T-cell (primary cell): ENCODE measurements at regions of chr14 and their contacts with region 1.

Region 1: DNA sequence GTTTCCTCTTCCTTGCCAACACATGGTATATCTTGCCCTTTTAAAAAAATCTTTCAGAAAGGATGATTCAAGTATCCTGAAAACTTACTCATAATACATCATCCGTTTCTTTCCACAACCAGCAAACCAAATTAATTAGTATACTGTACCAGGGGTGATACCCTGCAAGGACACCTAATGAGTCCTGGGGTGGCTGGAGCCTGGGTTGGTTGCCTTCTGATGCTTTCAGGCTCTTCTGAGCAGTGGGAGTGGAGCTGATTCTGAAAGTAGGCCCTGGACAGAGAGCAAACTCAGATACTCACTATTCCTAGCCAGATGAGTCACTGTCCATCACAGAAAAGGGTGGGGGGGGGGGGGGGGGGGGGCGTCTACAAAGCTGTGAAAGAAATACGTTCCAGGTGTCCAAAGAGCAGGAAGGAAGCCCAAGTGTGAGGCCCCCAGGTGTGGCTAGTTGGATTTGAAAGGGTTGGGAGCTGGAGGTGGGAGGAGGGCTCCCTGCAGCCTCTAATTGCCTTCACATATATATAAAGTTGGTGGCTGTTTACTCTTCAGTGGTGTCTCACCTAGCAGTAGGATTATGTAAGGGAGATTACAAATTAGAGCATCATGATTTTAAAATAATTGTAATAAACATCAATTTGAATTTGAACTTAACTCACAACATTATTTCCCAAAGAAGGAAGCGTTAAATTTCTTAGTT is 36.5 kb downstream of the FBXO33 start:
- DNase-seq: peak in 1 of 35 experiments; percentile 8
- ATAC-seq: no peak
- H3K4me3 ChIP-seq: no peak overlapping the region
- H3K4me3 Mint-ChIP-seq: no peak overlapping the region
- H3K27ac ChIP-seq: no peak overlapping the region
- H3K27ac Mint-ChIP-seq: peak overlapping the region in 1 of 2 donors; percentile 20
- H3K4me1 ChIP-seq: no peaks in the 10 kb centered on the region
- H3K4me1 Mint-ChIP-seq: peaks cover 0 to 4% (median 0%) of the 10 kb centered on the region in 3 donors
- H3K27me3 ChIP-seq: no peaks in the 10 kb centered on the region
- H3K27me3 Mint-ChIP-seq: no peaks in the 10 kb centered on the region

Region 2: DNA sequence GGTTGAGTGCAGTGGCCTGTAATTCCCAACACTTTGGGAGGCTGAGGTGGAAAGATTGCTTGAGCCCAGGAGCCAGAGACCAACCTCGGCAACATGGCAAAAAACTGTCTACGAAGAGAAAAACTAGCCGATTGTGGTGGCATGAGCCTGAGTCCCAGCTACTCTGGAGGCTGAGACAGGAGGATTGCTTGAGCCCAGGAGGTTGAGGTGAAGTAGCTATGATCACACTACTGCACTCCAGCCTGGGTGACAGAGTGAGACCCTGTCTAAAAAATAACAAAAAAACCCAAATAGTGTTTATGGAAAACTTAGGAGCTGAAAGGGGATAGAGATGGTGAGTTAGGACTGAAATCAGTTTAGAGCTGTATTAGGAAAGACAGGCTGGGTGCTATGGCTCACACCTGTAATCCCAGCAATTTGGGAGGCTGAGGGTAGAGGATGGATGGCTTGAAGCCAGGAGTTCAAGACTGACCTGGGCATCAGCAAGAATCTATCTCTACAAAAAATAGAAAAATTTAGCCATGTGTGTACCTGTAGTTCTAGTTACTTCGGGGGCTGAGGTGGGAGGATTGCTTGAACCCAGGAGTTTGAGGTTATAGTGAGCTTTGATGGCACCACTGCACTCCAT is 211.0 kb before region 1 on chr14:
- CTCF ChIA-PET with region 1: no interaction called
- POLR2A ChIA-PET with region 1: interaction called in 1 of 2 experiments, 12 read pairs
- DNase-seq: peak in 1 of 35 experiments; percentile 7
- ATAC-seq: no peak
- H3K4me3 ChIP-seq: no peak overlapping the region
- H3K4me3 Mint-ChIP-seq: no peak overlapping the region
- H3K27ac ChIP-seq: no peak overlapping the region
- H3K27ac Mint-ChIP-seq: no peak overlapping the region
- H3K4me1 ChIP-seq: peaks cover 4 to 7% of the 10 kb centered on the region in 2 experiments
- H3K4me1 Mint-ChIP-seq: peaks cover 0 to 12% (median 1%) of the 10 kb centered on the region in 3 donors
- H3K27me3 ChIP-seq: no peaks in the 10 kb centered on the region
- H3K27me3 Mint-ChIP-seq: no peaks in the 10 kb centered on the region

Region 3: GRCh38 chr14:39446131-39446744 is 50.5 kb after region 1 on chr14:
- CTCF ChIA-PET with region 1: no interaction called
- POLR2A ChIA-PET with region 1: no interaction called
- DNase-seq: no peak
- ATAC-seq: no peak
- H3K4me3 ChIP-seq: no peak overlapping the region
- H3K4me3 Mint-ChIP-seq: no peak overlapping the region
- H3K27ac ChIP-seq: no peak overlapping the region
- H3K27ac Mint-ChIP-seq: no peak overlapping the region
- H3K4me1 ChIP-seq: no peaks in the 10 kb centered on the region
- H3K4me1 Mint-ChIP-seq: no peaks in the 10 kb centered on the region
- H3K27me3 ChIP-seq: peaks cover 0 to 2% of the 10 kb centered on the region in 2 experiments
- H3K27me3 Mint-ChIP-seq: no peaks in the 10 kb centered on the region